ENCODE measurements at regions of chr1 and their contacts with region 1.

Region 1: DNA sequence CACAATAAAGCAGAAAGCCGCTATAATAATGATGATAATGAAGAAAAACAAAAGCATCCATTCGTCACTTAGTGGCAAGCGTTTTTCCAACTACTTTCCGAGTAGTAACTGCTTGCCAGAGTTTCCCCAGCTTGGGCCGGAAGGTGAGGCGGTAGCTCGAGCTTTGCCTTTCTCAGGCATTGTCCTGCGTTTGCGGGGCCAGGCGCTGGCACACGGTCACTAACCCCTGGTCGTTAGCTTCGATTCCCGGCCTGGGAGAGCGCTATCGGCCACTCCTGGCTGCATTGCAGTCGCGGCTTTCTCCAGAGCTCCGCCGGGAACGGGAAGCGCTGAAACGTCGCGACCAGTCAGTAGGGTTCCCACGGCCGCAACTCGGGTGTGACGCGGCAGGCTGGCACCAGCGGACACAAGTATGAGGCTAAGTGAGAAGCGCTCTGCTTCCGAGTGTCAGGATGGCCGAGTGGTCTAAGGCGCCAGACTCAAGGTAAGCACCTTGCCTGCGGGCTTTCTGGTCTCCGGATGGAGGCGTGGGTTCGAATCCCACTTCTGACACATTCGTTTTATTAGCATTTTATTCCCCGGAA is 14.6 kb upstream of the ZNF692 start:
- DNase-seq: peak; percentile 91
- H3K4me3 Mint-ChIP-seq: peak overlapping the region; percentile 87
- H3K27ac Mint-ChIP-seq: peak overlapping the region; percentile 96
- H3K4me1 Mint-ChIP-seq: peaks cover 22% of the 10 kb centered on the region
- H3K27me3 Mint-ChIP-seq: peaks cover 17% of the 10 kb centered on the region

Region 2: DNA sequence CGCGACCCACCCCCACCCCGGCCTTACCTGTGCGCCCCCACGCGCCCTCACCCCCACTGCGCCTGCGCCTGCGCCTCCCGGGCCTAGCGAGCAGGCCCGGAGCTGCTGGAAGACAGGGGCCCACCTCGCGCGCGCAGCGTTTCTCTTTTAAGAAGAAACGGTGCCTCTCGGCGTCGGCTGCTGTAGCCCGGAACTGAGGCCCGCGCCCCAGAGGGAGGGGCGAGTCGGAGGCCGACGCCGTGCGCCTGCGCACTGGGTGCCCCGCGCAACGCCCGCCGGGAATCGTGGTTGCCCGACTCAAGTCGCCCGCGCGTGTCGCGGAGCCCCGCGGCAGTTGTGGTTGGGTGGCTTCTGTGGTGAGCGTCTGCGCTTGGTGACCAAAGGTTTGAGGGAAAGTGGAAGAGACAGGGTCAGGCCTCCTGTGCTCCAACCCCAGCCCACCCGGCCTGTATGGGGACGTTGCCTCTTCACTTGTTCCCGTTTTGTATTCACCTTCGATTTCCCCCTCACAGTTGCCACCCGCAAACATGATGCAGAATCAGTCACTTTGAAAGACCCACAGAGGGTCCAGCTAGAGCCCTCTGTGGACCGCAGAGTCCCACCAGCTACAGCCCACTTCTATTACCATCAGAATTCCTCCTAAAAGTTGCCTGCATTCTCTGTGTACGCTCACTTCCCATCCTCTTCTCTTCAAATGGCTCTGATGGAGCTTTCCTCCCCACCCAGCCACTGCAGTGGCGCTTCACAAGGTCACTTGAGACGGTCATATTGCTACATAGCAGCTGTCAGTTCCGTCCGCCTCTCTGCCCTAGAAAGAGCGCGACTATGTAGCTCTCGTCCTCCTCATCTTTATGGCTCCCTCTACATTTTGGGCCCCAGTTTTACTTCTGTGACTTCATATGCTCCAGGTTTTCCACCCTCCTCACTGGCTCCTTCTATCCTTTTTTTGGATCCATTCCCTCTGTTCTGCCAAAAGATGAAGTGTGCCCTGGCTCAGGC is 14.3 kb before region 1 on chr1 and contains the start of gene ZNF692:
- intact Hi-C with region 1: loop called (anchors 1 kb)
- DNase-seq: peak; percentile 96
- H3K4me3 Mint-ChIP-seq: peak within 1 kb of the TSS; percentile 93
- H3K27ac Mint-ChIP-seq: peak within 1 kb of the TSS; percentile 96
- H3K4me1 Mint-ChIP-seq: peaks cover 40% of the 10 kb centered on the region
- H3K27me3 Mint-ChIP-seq: no peaks in the 10 kb centered on the region
- total RNA-seq, gene ZNF692: 86.4 and 87.0 TPM in 2 replicates